Dorsolateral prefrontal cortex (tissue), 120 donors: ENCODE measurements at regions of chr3 and their contacts with region 1.

Region 1: GRCh38 chr3:107927361-107928083 is 163.3 kb downstream of the CD47 start:
- DNase-seq: peak; percentile 76 to 90 (median 85)
- H3K4me3 ChIP-seq: peak overlapping the region; percentile 45 to 89 (median 72)
- H3K27ac ChIP-seq: peak overlapping the region; percentile 46 to 98 (median 94)
- H3K27me3 ChIP-seq: no peaks in the 10 kb centered on the region
- CTCF ChIP-seq: peak; percentile 69 to 98 (median 92)

Region 2: DNA sequence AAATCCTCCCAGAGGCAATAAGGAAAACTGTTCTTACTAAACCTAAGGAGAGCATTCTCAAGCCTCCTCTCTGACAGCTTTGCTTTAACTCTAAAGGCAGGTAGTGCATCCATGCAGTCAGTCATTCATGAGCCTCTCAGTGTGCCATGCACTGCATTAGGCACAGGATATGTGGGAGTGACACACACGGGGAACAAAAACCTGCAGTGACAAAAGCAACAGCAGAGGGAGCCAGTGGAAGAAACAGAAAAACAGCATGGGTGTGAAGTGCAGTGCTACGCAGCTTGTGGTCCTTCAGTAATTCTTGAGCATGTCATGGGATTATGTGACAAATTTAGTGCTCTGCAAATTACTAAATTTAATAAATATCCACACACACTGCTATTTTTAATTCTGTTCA is 174.0 kb before region 1 on chr3:
- intact Hi-C with region 1: loop called (anchors 2 to 10 kb)
- DNase-seq: peak in 9 of 10 donors; percentile 15 to 74 (median 54)
- H3K4me3 ChIP-seq: no peak overlapping the region
- H3K27ac ChIP-seq: peak overlapping the region in 21 of 59 donors; percentile 2 to 87 (median 38)
- H3K27me3 ChIP-seq: no peaks in the 10 kb centered on the region
- CTCF ChIP-seq: peak; percentile 48 to 88 (median 74)

Region 3: DNA sequence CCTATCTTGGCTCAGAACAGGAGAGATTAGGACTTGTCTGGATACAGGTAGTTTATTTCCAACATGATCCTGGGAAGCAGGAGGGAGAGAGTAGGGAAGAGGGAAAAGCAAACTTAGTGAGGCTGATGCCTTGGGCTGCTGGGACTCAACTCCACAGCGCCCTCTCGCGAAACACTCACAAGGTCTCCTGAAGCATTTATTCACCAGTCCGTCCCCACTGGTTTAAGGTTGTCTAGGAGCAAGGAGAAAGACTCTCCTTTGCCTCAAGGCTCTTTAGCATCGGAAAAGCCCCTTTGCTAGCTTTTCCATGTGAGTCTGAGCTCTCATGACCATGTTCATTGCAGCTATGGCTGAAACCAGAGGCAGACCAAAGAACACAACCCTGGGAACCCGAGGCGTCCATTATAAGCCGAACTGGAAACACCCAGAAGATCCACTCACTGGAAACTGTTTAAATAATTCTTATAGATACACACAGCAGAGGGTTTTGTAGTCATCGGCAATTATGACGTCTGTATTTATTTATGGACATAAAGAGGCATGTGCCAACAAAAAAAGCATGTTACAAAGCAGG is 81.2 kb before region 1 on chr3:
- intact Hi-C with region 1: loop called in 1 of 2 experiments (anchors 5 kb)
- DNase-seq: peak in 9 of 10 donors; percentile 42 to 79 (median 68)
- H3K4me3 ChIP-seq: no peak overlapping the region
- H3K27ac ChIP-seq: peak overlapping the region in 36 of 59 donors; percentile 0 to 75 (median 46)
- H3K27me3 ChIP-seq: no peaks in the 10 kb centered on the region
- CTCF ChIP-seq: peak in 55 of 56 donors; percentile 23 to 76 (median 59)

Region 4: DNA sequence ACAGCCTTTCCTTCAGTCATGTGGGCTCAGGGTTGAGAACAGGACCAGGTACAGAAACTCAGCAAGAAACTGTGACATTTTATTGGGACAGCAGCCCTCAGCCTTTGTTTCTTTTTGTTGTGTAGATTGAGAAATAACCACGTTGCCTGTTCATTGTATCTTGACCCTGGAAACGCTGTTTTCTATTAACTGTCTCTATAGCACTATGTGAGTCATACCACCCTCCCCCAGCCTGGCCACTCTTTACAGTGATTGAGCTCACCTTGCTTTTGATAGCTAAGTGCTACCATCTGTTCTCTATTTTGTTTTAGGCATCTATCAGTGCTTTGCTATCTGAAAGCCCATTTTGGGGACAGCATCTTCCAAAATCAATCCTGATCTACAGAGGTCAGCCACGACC is 35.4 kb after region 1 on chr3:
- intact Hi-C with region 1: no loop called
- DNase-seq: peak in 1 of 10 donors; percentile 45
- H3K4me3 ChIP-seq: no peak overlapping the region
- H3K27ac ChIP-seq: no peak overlapping the region
- H3K27me3 ChIP-seq: no peaks in the 10 kb centered on the region
- CTCF ChIP-seq: no peak

Region 5: DNA sequence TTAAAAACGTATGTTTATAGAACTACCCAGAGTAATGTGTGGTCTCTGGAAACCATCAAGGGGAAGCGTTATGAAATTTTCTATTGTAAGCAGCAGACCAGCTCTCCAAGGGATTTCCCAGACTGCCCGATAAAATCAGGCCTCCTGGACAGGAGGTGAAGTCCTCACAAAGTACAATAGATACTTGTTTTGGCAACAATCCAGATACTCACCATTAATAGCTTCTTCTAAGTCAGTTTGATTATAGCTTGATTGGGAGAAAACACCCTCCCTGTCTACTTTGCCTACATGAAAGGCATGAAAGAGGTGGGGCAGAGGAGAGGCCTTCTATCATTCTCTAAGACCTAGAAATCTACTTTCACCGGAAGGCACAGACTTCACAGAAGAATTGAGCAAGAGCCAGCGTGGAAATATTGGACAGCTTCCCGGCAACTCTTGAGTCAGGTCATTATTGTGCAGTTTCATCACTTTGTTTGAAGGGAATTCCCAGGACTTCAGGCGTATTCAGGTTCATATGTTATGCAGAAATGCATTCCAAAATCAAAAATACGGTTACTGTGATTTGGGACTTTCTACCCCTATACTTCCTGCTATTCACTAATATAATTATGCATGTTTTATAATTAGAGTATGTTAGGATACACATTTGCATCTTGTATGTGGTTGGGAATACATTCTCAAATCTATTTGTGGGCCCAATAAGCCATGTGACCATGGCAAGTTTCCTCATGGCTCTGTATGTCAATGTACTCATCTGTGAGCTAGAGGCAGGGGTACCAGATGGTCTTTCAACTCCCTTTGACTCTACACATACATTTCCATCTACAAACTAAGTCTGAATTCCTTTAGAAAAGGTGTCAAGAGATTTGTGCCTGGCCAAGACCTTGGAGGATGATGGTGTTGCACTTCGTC is 59.8 kb after region 1 on chr3:
- intact Hi-C with region 1: no loop called
- DNase-seq: no peak
- H3K4me3 ChIP-seq: no peak overlapping the region
- H3K27ac ChIP-seq: no peak overlapping the region
- H3K27me3 ChIP-seq: no peaks in the 10 kb centered on the region
- CTCF ChIP-seq: no peak

Region 6: GRCh38 chr3:108183181-108183580 is 255.7 kb after region 1 on chr3:
- intact Hi-C with region 1: no loop called
- DNase-seq: no peak
- H3K4me3 ChIP-seq: no peak overlapping the region
- H3K27ac ChIP-seq: no peak overlapping the region
- H3K27me3 ChIP-seq: no peaks in the 10 kb centered on the region
- CTCF ChIP-seq: no peak

Region 7: DNA sequence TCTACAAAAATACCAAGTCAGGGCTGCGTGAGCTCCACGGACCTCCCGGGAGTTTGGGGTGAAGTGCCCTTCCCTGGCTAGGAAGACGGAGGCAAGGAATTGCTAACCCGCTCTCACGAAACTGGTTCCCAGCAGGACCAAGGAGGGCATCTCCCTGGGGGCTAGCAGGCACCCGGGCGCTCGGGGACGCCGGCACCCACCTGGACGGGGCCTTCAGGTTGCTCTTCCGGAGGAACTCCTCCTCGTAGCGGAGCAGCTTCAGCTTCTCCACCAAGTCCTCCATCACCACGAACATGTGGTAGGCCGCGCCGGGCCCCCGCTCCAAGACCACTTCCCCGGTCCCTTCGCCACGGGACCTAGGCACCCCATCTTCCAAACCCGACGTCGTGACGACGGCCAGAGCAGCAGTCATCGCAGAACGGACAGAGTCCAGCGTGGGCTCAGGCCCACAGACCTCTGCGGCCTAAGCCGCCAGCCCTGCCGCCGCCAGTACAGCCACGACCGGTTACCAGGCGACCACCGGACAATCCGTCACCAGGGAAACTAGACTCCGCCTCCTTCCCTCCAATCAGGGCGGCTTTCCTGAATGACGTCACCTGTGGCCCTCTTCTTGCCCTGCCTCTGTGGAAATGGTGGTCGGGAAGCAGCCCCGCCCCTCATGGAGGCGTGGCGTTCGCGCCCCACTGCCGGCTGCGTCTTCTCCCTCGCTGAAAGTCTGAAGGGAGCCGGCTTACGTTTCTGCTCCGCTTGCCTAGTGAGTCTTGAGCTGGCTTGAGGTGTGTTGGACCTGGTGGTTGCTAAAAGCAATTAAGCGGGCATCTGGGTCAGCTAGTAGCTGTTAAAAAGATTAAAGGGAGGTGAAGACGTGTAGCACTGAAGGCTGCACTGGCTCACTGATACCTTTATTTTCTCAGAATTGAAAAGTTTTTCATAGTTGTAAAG is 294.7 kb after region 1 on chr3 and contains the start of gene IFT57:
- intact Hi-C with region 1: loop called in 1 of 2 experiments (anchors 10 kb)
- DNase-seq: peak; percentile 97 to 99 (median 99)
- H3K4me3 ChIP-seq: peak within 1 kb of the TSS; percentile 70 to 98 (median 86)
- H3K27ac ChIP-seq: peak within 1 kb of the TSS in 58 of 59 donors; percentile 11 to 90 (median 76)
- H3K27me3 ChIP-seq: no peaks in the 10 kb centered on the region
- CTCF ChIP-seq: peak in 17 of 56 donors; percentile 9 to 44 (median 23)
- total RNA-seq, gene IFT57: 22.4 to 63.6 (median 43.7) TPM

Region 8: GRCh38 chr3:108472001-108472591 is 544.6 kb after region 1 on chr3:
- intact Hi-C with region 1: loop called (anchors 5 kb)
- DNase-seq: peak in 2 of 10 donors; percentile 42 to 53
- H3K4me3 ChIP-seq: no peak overlapping the region
- H3K27ac ChIP-seq: peak overlapping the region in 4 of 59 donors; percentile 3 to 68 (median 47)
- H3K27me3 ChIP-seq: no peaks in the 10 kb centered on the region
- CTCF ChIP-seq: no peak